ENCODE measurements at regions of chr2 and their contacts with region 1.

Region 1: DNA sequence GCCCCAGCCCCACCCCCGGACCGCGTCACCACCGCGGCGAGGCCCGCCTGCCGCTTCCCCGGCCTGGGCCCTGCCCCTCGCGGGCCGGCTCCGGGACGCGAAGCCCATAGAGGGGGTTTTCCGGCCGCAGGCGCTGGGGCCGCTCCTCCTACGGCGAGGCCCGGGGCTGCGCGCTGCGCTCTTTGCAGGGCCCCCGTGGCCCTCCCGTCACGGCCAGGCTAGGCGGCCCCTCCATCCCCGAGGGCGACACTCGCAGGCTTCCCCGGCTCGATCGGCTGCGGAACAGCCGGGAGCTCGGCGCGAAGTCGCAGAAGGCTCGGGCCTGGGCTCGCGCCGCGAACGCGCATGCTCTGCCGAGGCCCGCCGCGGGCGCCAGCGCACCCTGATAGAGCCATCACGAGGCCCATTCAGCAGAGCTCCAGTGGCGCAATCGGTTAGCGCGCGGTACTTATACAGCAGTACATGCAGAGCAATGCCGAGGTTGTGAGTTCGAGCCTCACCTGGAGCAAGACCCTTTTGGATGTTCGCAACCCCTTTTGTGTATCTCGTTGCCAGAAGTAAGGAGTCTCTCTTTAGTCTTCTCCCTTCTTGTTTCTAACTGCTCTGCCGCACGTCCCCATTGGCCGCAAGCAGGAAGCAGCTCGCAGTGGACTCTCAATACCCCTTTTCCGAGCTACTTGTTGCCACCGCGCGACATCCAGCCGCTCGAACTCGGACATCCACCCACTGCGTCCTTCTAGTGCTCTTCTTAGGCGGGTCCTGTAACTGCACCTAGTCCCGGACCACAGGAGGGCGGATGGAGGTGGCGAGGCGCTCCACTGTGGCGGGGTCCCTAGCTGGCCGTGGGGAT is 18.0 kb upstream of the HAAO start:
- DNase-seq: peak; percentile 94
- H3K4me3 Mint-ChIP-seq: peak overlapping the region; percentile 89
- H3K27ac Mint-ChIP-seq: peak overlapping the region; percentile 100
- H3K4me1 Mint-ChIP-seq: peaks cover 20% of the 10 kb centered on the region
- H3K27me3 Mint-ChIP-seq: peaks cover 21% of the 10 kb centered on the region

Region 2: GRCh38 chr2:42102024-42102590 is 708.2 kb before region 1 on chr2:
- intact Hi-C with region 1: loop called (anchors 5 kb)
- DNase-seq: peak; percentile 92
- H3K4me3 Mint-ChIP-seq: peak overlapping the region; percentile 73
- H3K27ac Mint-ChIP-seq: peak overlapping the region; percentile 94
- H3K4me1 Mint-ChIP-seq: peaks cover 45% of the 10 kb centered on the region
- H3K27me3 Mint-ChIP-seq: no peaks in the 10 kb centered on the region

Region 3: DNA sequence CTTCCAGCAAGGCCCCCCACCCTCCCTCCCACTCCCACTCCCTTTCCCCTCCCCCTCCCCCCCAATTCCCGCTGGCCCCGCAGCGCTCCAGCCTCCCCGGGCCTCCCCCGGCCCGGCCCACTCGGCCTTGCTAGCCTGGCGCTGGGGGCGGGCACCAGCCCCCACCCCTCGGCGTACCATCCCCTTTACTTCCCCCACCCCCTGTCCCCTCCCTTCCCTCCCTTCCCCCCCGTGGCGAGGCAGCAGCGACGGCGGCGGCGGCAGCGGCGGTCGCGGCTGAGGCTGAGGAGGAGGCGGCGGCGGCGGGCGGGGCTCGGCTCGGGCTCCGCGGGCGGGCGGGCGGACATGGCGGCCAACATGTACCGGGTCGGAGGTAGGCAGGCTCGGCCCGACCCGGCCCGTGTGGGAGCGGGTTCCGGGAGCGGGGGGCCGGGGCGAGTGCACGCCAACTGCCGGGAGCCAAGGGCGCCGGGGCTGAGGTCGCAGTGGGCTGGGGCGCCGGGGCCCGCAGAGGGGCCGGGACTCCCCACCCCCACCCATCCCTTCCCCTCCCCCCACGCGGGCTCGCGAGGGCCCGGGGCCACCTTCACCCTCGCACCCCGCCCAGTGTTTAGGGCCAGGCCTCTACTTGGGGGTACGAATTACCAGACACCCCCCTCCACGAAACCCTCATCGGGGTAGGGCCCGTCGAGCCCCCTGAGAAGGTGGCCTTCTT is 241.8 kb before region 1 on chr2 and contains the start of gene MTA3:
- intact Hi-C with region 1: loop called (anchors 1 kb)
- DNase-seq: peak; percentile 54
- H3K4me3 Mint-ChIP-seq: peak within 1 kb of the TSS; percentile 92
- H3K27ac Mint-ChIP-seq: peak within 1 kb of the TSS; percentile 96
- H3K4me1 Mint-ChIP-seq: peaks cover 20% of the 10 kb centered on the region
- H3K27me3 Mint-ChIP-seq: peaks cover 3% of the 10 kb centered on the region
- total RNA-seq, gene MTA3: 29.4 and 31.1 TPM in 2 replicates

Region 4: GRCh38 chr2:42792583-42793333 is 17.6 kb before region 1 on chr2 and contains the start of gene HAAO:
- intact Hi-C with region 1: loop called (anchors 1 kb)
- DNase-seq: no peak
- H3K4me3 Mint-ChIP-seq: peak within 1 kb of the TSS; percentile 76
- H3K27ac Mint-ChIP-seq: peak within 1 kb of the TSS; percentile 59
- H3K4me1 Mint-ChIP-seq: peaks cover 26% of the 10 kb centered on the region
- H3K27me3 Mint-ChIP-seq: peaks cover 38% of the 10 kb centered on the region
- total RNA-seq, gene HAAO: 0.37 and 0.86 TPM in 2 replicates

Region 5: GRCh38 chr2:43559391-43560230 is 749.3 kb after region 1 on chr2:
- intact Hi-C with region 1: loop called (anchors 5 kb)
- DNase-seq: no peak
- H3K4me3 Mint-ChIP-seq: peak overlapping the region; percentile 41
- H3K27ac Mint-ChIP-seq: peak overlapping the region; percentile 94
- H3K4me1 Mint-ChIP-seq: peaks cover 71% of the 10 kb centered on the region
- H3K27me3 Mint-ChIP-seq: no peaks in the 10 kb centered on the region

Region 6: DNA sequence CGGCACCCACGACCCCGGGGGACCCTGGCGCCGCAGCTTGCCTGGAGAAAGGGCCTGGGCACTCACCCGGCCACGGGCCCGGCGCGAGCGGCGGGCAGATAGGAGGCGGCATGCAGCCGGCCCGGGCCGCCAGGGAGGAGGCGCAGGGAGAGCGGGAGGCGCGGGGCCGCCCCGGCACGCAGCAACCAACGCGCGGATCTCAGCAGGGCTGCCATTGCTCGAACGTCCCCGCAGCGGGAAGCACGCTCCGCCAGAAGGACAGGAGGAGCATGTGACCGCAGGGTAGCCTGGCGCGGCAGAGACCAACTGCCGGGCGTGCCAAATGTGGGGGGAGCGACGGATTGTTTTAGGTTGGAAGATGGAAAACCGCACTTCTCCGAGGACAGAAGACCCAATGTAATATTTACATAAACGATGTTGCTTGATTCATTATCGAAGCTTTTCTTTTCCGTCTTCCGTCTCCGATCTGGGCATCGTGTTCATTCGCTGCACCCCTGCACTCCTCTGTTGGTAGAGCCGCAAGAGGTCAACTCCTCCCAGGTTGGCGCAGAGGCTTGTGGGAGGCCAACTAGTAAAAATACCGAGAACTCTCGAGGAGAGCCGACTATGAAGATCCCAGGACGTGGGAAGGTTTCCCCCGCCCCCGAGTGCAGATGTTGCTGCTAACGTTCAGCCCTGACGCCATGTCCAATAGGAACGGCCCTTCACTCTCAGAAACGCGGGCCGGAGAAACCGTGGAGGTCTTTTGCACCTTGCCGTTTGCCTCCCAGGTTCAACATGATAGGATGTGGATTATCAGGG is 1185.6 kb after region 1 on chr2 and contains the start of gene LRPPRC:
- intact Hi-C with region 1: loop called (anchors 5 kb)
- DNase-seq: peak; percentile 85
- H3K4me3 Mint-ChIP-seq: peak within 1 kb of the TSS; percentile 95
- H3K27ac Mint-ChIP-seq: peak within 1 kb of the TSS; percentile 94
- H3K4me1 Mint-ChIP-seq: peaks cover 45% of the 10 kb centered on the region
- H3K27me3 Mint-ChIP-seq: peaks cover 2% of the 10 kb centered on the region
- total RNA-seq, gene LRPPRC: 150 and 162 TPM in 2 replicates